ENCODE measurements at regions of chr6 and their contacts with region 1.

Region 1: DNA sequence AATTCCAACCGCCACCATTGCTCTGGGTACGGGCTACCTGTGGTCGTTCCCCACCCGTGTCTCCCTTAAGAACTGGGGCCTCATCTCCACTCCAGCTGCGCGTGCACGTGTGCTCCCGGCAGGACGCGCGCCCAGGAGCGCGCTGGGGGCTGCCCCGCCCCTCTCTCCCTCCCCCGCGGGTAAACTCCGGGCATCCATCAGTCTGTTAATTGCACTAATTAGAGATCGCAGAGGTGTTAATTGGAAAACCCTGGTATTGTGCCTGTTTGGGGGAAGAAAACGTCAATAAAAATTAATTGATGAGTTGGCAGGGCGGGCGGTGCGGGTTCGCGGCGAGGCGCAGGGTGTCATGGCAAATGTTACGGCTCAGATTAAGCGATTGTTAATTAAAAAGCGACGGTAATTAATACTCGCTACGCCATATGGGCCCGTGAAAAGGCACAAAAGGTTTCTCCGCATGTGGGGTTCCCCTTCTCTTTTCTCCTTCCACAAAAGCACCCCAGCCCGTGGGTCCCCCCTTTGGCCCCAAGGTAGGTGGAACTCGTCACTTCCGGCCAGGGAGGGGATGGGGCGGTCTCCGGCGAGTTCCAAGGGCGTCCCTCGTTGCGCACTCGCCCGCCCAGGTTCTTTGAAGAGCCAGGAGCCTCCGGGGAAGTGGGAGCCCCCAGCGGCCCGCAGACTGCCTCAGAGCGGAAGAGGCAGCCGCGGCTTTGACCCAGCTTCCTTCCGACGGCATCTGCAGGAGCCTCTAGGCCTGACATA is 14.4 kb downstream of the FOXP4 start:
- DNase-seq: peak; percentile 55
- ATAC-seq: peak; percentile 85
- H3K4me3 Mint-ChIP-seq: peak overlapping the region; percentile 89
- H3K27ac Mint-ChIP-seq: peak overlapping the region; percentile 75
- H3K4me1 Mint-ChIP-seq: peaks cover 35% of the 10 kb centered on the region
- H3K27me3 Mint-ChIP-seq: no peaks in the 10 kb centered on the region
- CTCF ChIP-seq: no peak

Region 2: GRCh38 chr6:41463062-41463930 is 97.3 kb before region 1 on chr6:
- CTCF ChIA-PET with region 1: no interaction called
- POLR2A ChIA-PET with region 1: no interaction called
- intact Hi-C with region 1: loop called (anchors 1 kb)
- DNase-seq: no peak
- ATAC-seq: peak; percentile 82
- H3K4me3 Mint-ChIP-seq: no peak overlapping the region
- H3K27ac Mint-ChIP-seq: no peak overlapping the region
- H3K4me1 Mint-ChIP-seq: peaks cover 2% of the 10 kb centered on the region
- H3K27me3 Mint-ChIP-seq: peaks cover 31% of the 10 kb centered on the region
- CTCF ChIP-seq: peak; percentile 41

Measured in activated B cell treated with CpG ODN at 0.5 μM for 24 hours (primary cell).